ENCODE measurements at regions of chr3 and their contacts with region 1.

Region 1: DNA sequence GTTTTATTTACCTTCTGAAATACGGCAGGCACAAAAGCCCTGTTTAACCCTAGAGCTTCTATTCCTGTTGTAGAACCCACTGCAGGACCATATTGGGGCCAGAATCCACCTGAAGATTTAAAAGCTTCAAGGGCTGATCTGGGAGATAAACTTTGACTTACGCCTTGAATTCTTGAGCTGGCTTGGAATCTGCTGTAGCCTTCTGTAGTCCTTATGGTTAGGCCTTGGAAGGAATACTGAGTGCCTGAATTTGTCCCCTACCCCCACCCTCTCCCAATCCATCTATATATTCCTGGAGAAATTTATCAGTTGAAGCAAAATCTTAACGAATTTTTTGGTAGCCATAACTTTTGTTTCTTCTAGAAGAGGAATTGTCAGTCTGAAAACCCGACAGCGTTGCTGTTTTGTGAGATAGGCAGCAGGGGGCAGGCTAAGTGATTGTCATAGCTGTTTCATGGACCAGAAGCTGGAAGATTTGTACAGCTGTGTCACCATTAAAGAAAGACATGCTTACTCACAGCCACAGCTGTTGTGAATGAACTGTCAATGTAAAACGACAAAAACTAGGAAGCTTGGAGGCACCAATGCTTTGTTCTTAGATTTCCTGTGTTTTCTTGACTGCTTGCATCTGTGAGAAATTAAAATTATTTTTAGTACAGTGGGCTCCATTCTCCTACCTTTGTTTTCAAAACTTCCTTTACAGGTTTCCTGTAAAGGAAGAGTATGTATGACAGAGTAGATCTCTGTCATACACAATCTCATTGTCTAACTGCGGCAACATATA is 12.8 kb downstream of the LXN start:
- DNase-seq: peak in 31 of 35 experiments; percentile 6 to 64 (median 35)
- ATAC-seq: peak; percentile 54 to 69 (median 68)
- H3K4me3 ChIP-seq: no peak overlapping the region
- H3K4me3 Mint-ChIP-seq: no peak overlapping the region
- H3K27ac ChIP-seq: no peak overlapping the region
- H3K27ac Mint-ChIP-seq: peak overlapping the region in 1 of 2 donors; percentile 28
- H3K4me1 ChIP-seq: no peaks in the 10 kb centered on the region
- H3K4me1 Mint-ChIP-seq: peaks cover 0 to 7% (median 5%) of the 10 kb centered on the region in 3 donors
- H3K27me3 ChIP-seq: no peaks in the 10 kb centered on the region
- H3K27me3 Mint-ChIP-seq: no peaks in the 10 kb centered on the region

Region 2: GRCh38 chr3:158233791-158234190 is 425.9 kb before region 1 on chr3:
- CTCF ChIA-PET with region 1: no interaction called
- POLR2A ChIA-PET with region 1: no interaction called
- DNase-seq: no peak
- ATAC-seq: no peak
- H3K4me3 ChIP-seq: no peak overlapping the region
- H3K4me3 Mint-ChIP-seq: no peak overlapping the region
- H3K27ac ChIP-seq: no peak overlapping the region
- H3K27ac Mint-ChIP-seq: no peak overlapping the region
- H3K4me1 ChIP-seq: no peaks in the 10 kb centered on the region
- H3K4me1 Mint-ChIP-seq: no peaks in the 10 kb centered on the region
- H3K27me3 ChIP-seq: no peaks in the 10 kb centered on the region
- H3K27me3 Mint-ChIP-seq: no peaks in the 10 kb centered on the region

Region 3: DNA sequence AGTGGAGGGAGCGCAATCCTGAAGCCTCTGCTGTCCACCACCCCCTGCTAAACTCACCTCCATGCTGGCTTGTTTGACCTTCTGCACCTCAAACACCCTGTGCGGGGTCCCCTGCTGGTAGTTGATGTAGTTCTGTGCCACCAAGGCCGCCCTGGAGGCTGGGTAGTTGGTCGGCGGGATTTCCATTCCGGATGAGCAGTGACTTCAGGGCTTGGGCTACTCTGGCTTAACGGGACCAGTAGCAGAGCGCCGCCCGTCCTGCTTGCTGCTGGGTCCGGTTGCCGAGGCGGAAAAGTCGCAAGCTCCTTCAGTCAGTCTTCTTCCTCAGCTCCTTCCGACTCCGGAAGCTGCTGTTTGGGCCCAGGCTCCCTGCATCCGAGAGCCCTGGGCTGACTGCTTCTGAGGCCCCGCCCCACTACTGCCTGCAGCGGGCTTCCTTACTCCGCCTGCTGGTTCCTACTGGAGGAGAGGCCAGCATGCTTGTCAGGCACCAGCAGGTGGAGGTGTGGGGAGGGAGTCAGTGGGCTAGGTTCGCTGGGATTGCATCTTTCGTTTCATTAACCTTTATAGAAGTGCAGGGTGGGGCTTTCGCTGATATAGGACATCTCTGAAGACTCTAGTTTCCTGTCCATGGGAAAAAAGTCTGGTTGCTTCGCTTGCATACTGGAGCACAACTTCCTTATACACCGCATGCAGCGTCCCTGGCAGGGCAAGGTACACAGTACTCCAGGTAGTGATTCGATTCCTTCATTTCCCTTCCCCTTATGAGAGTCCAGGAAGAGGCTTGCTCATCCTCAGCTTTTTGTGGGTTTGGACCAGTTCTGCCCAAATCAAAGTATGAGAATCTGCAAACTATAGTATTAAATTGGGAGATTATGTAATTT is 12.9 kb after region 1 on chr3 and contains the start of gene LXN:
- CTCF ChIA-PET with region 1: interaction called, 6 to 9 read pairs
- POLR2A ChIA-PET with region 1: interaction called in 1 of 2 experiments, 11 read pairs
- DNase-seq: peak; percentile 58 to 85 (median 74)
- ATAC-seq: peak; percentile 98 to 99 (median 99)
- H3K4me3 ChIP-seq: peak within 1 kb of the TSS; percentile 62 to 87
- H3K4me3 Mint-ChIP-seq: peak within 1 kb of the TSS; percentile 92 to 95 (median 93)
- H3K27ac ChIP-seq: peak within 1 kb of the TSS; percentile 47
- H3K27ac Mint-ChIP-seq: peak within 1 kb of the TSS; percentile 85 to 91
- H3K4me1 ChIP-seq: peaks cover 9 to 12% of the 10 kb centered on the region in 2 experiments
- H3K4me1 Mint-ChIP-seq: peaks cover 27 to 34% (median 28%) of the 10 kb centered on the region in 3 donors
- H3K27me3 ChIP-seq: no peaks in the 10 kb centered on the region
- H3K27me3 Mint-ChIP-seq: no peaks in the 10 kb centered on the region
- total RNA-seq, gene LXN: 2.5 to 6.7 (median 3.9) TPM

Region 4: GRCh38 chr3:158976966-158977365 is 317.3 kb after region 1 on chr3:
- CTCF ChIA-PET with region 1: no interaction called
- POLR2A ChIA-PET with region 1: no interaction called
- DNase-seq: no peak
- ATAC-seq: no peak
- H3K4me3 ChIP-seq: no peak overlapping the region
- H3K4me3 Mint-ChIP-seq: no peak overlapping the region
- H3K27ac ChIP-seq: no peak overlapping the region
- H3K27ac Mint-ChIP-seq: no peak overlapping the region
- H3K4me1 ChIP-seq: no peaks in the 10 kb centered on the region
- H3K4me1 Mint-ChIP-seq: no peaks in the 10 kb centered on the region
- H3K27me3 ChIP-seq: no peaks in the 10 kb centered on the region
- H3K27me3 Mint-ChIP-seq: peaks cover 0 to 5% of the 10 kb centered on the region in 2 donors

Measured in T-cell (primary cell).